Activated CD4-positive, alpha-beta memory T cell treated with anti-CD3 and anti-CD28 coated beads for 36 hours (primary cell): ENCODE measurements at regions of chr9 and their contacts with region 1.

Region 1: DNA sequence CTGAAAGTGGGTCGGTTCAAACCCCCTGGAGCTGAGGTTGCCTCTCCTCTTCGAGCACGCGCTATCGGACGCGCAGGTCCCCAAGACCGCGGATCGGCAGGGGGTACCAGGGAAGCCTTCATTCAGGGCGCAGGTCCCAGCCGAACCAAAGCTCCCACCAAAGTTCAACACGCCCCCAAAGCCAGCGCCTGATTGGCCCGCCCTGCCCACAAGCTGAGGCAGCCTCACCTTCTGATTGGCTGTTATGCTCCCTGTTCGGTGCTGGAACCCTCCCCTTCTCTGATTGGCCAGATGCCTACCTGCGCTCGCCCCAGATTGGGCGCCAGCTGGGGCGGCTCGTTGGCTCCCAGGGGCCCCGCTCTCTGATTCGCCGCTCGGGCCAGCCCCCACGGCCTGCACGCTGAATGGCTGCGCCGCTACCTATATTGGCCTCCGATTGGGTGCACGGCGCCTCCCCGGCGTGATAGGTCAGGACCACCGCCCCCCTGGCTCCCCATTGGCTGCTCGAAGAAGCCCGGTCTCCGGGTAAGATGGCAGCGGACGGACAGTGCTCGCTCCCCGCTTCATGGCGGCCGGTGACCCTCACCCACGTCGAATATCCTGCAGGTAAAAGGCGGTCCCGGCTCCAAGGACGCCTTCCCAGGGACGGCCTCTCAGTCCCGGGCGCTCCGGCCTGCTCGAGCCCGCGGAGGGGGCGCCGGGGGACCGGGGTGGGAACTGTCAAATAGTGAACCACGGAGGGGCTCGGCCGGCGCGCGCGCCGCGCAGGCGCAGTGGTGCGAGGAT is at the start of gene DOLPP1:
- DNase-seq: peak; percentile 99
- H3K4me3 Mint-ChIP-seq: peak within 1 kb of the TSS; percentile 83
- H3K27ac Mint-ChIP-seq: peak within 1 kb of the TSS; percentile 42
- H3K4me1 Mint-ChIP-seq: peaks cover 17% of the 10 kb centered on the region
- H3K27me3 Mint-ChIP-seq: no peaks in the 10 kb centered on the region
- total RNA-seq, gene DOLPP1: 13.9 to 15.3 TPM

Region 2: GRCh38 chr9:129110740-129111527 is 30.1 kb after region 1 on chr9 and contains the starts of genes CRAT and PTPA:
- CTCF ChIA-PET with region 1: no interaction called
- POLR2A ChIA-PET with region 1: interaction called, 8 read pairs
- intact Hi-C with region 1: loop called (anchors 1 kb)
- DNase-seq: peak; percentile 98
- H3K4me3 Mint-ChIP-seq: peak within 1 kb of the TSS; percentile 94
- H3K27ac Mint-ChIP-seq: peak within 1 kb of the TSS; percentile 97
- H3K4me1 Mint-ChIP-seq: peaks cover 34% of the 10 kb centered on the region
- H3K27me3 Mint-ChIP-seq: no peaks in the 10 kb centered on the region
- total RNA-seq, gene CRAT: 16.0 to 16.4 TPM
- total RNA-seq, gene PTPA: 74.6 to 76.3 TPM